Activated CD8-positive, alpha-beta T cell treated with anti-CD3 and anti-CD28 coated beads for 36 hours (primary cell): ENCODE measurements at regions of chr7 and their contacts with region 1.

Region 1: GRCh38 chr7:106346678-106347217 is 62.0 kb upstream of the NAMPT start:
- DNase-seq: peak; percentile 75
- ATAC-seq: peak; percentile 67
- H3K4me3 Mint-ChIP-seq: peak overlapping the region; percentile 67
- H3K27ac Mint-ChIP-seq: peak overlapping the region; percentile 100
- H3K4me1 Mint-ChIP-seq: peaks cover 52% of the 10 kb centered on the region
- H3K27me3 Mint-ChIP-seq: peaks cover 6% of the 10 kb centered on the region
- CTCF ChIP-seq: no peak

Region 2: GRCh38 chr7:106279425-106280197 is 67.1 kb before region 1 on chr7:
- CTCF ChIA-PET with region 1: interaction called, 10 read pairs
- POLR2A ChIA-PET with region 1: interaction called, 111 read pairs
- intact Hi-C with region 1: no loop called
- DNase-seq: peak; percentile 84
- ATAC-seq: peak; percentile 75
- H3K4me3 Mint-ChIP-seq: peak overlapping the region; percentile 88
- H3K27ac Mint-ChIP-seq: peak overlapping the region; percentile 96
- H3K4me1 Mint-ChIP-seq: peaks cover 43% of the 10 kb centered on the region
- H3K27me3 Mint-ChIP-seq: no peaks in the 10 kb centered on the region
- CTCF ChIP-seq: no peak

Region 3: DNA sequence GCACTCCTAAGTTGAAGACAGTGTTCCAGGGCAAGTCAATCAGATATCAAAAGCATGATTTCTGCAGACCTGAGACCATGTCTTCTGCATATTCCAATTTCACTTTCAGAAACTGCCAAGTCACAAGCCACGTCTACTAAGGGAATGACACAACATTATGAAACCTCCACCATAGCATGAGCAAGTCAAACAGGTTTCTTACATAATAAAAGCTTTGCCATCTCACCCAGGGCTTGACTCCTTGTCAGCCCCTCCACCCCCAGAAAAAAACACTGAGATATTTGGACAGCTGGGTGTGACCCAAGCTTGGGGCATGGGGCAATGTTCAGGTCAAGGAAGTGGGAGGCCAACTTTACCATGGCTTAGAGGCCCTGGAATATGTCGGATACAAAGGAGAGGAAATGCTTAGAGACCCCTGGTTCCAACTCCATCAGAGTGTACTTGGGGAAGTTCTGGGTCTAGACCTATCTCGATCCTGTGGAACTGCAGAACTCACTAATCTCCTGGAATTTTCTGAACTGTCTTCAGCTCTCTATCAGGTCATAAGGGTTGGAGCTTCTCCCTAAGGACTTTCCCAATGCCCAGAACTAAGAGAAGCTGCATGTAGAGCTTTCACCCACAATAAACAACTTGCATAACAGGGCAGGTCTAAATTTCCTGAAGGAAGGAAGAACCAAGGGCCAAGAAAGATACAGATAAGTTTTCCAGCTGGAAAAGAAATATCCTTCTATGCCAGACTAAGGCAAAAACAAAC is 18.7 kb after region 1 on chr7:
- CTCF ChIA-PET with region 1: interaction called, 3 read pairs
- POLR2A ChIA-PET with region 1: interaction called, 11 read pairs
- intact Hi-C with region 1: no loop called
- DNase-seq: peak; percentile 28
- ATAC-seq: peak; percentile 64
- H3K4me3 Mint-ChIP-seq: no peak overlapping the region
- H3K27ac Mint-ChIP-seq: no peak overlapping the region
- H3K4me1 Mint-ChIP-seq: peaks cover 37% of the 10 kb centered on the region
- H3K27me3 Mint-ChIP-seq: peaks cover 33% of the 10 kb centered on the region
- CTCF ChIP-seq: no peak

Region 4: DNA sequence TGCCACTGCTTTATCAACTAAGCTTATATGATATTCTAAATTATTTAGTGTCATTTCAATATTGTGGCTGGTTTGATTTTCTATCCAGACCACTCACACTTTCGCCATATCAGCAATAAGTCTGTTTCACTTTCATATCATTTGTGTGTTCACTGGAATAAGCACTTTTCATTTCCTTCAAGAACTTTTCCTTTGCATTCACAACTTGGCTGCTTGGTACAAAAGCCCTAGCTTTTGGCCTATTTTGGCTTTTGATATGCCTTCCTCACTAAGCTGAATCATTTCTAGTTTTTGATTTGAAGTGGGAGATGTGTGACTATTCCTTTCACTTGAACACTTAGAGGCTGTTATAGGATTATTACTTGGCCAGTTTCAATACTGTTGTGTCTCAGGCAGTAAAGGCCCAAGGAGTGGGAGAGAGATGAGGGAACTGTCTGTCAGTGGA is 59.0 kb after region 1 on chr7:
- CTCF ChIA-PET with region 1: no interaction called
- POLR2A ChIA-PET with region 1: interaction called, 18 read pairs
- intact Hi-C with region 1: loop called (anchors 1 kb)
- DNase-seq: peak; percentile 40
- ATAC-seq: peak; percentile 95
- H3K4me3 Mint-ChIP-seq: no peak overlapping the region
- H3K27ac Mint-ChIP-seq: peak overlapping the region; percentile 27
- H3K4me1 Mint-ChIP-seq: peaks cover 32% of the 10 kb centered on the region
- H3K27me3 Mint-ChIP-seq: peaks cover 24% of the 10 kb centered on the region
- CTCF ChIP-seq: no peak

Region 5: GRCh38 chr7:106425017-106425719 is 78.4 kb after region 1 on chr7:
- CTCF ChIA-PET with region 1: interaction called, 5 read pairs
- POLR2A ChIA-PET with region 1: interaction called, 30 read pairs
- intact Hi-C with region 1: loop called (anchors 1 kb)
- DNase-seq: peak; percentile 93
- ATAC-seq: peak; percentile 88
- H3K4me3 Mint-ChIP-seq: peak overlapping the region; percentile 71
- H3K27ac Mint-ChIP-seq: peak overlapping the region; percentile 98
- H3K4me1 Mint-ChIP-seq: peaks cover 72% of the 10 kb centered on the region
- H3K27me3 Mint-ChIP-seq: peaks cover under 1% of the 10 kb centered on the region
- CTCF ChIP-seq: no peak